SK-N-SH (cell line): ENCODE measurements at regions of chr21 and their contacts with region 1.

Region 1: DNA sequence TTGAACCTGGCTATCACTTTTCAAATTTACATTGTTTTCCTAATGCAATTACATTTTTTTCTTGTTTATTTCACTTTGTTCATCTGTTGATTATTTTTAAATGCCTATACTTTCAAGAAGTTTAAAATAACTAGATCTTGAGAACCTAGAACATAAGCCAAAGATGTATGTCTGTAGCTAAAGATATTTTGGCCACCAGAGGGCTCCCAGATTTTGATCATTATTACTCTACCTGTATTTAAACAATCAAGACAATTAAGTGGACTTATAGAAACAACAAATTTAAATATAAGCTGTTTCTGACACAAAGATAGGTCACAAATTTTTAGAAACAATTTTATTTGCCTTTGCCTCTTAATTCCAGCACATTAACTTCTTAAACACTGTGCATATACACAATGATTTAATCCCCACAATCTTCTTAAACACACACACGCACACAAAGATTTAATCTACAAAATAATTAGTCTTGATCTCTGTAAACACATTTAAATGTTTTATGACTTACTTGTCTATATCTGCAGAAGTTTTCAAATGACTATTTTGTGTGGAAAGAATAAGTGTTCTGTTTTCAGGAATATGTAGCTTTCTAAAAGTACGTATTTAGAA is 380.0 kb downstream of the DSCAM start:
- DNase-seq: peak; percentile 17
- H3K4me3 ChIP-seq: no peak overlapping the region; a peak in 1 of 4 replicates
- H3K27ac ChIP-seq: no peak overlapping the region
- H3K4me1 ChIP-seq: no peaks in the 10 kb centered on the region; a peak in 1 of 4 replicates
- H3K27me3 ChIP-seq: no peaks in the 10 kb centered on the region
- CTCF ChIP-seq: 0 out of 2 replicates have a peak, but pooled peaks have one; percentile 27
- EP300 ChIP-seq: no peak
- RAD21 ChIP-seq: peak; percentile 58

Region 2: GRCh38 chr21:40186045-40186444 is 281.0 kb before region 1 on chr21:
- CTCF ChIA-PET with region 1: no interaction called
- POLR2A ChIA-PET with region 1: no interaction called
- DNase-seq: no peak
- H3K4me3 ChIP-seq: no peak overlapping the region
- H3K27ac ChIP-seq: no peak overlapping the region
- H3K4me1 ChIP-seq: peaks cover 0 to 7% of the 10 kb centered on the region in 2 experiments; a peak in 1 of 4 replicates
- H3K27me3 ChIP-seq: no peaks in the 10 kb centered on the region
- CTCF ChIP-seq: no peak
- EP300 ChIP-seq: no peak
- RAD21 ChIP-seq: no peak

Region 3: DNA sequence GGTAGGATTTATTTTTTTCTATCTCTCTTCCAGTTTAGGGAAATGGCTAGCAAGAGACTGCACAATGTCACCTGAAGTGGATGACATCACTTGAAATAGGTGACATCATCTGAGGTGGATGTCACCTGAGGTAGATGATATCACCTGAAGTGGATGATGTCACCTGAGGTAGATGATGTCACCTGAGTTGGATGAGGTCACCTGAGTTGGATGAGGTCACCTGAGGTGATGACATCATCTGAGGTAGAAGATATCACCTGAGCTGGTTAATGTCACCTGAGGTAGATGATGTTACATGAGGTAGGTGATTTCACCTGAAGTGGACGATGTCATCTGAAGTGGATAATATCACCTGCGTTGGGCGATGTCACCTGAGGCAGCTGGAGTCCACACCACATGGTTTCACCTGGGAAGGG is 33.4 kb before region 1 on chr21:
- CTCF ChIA-PET with region 1: no interaction called
- POLR2A ChIA-PET with region 1: no interaction called
- DNase-seq: no peak
- H3K4me3 ChIP-seq: no peak overlapping the region
- H3K27ac ChIP-seq: no peak overlapping the region
- H3K4me1 ChIP-seq: no peaks in the 10 kb centered on the region; a peak in 1 of 4 replicates
- H3K27me3 ChIP-seq: no peaks in the 10 kb centered on the region
- CTCF ChIP-seq: no peak
- EP300 ChIP-seq: no peak
- RAD21 ChIP-seq: no peak

Region 4: GRCh38 chr21:40447016-40447415 is 20.0 kb before region 1 on chr21:
- CTCF ChIA-PET with region 1: interaction called, 22 read pairs
- POLR2A ChIA-PET with region 1: no interaction called
- DNase-seq: no peak
- H3K4me3 ChIP-seq: no peak overlapping the region
- H3K27ac ChIP-seq: no peak overlapping the region
- H3K4me1 ChIP-seq: peaks cover 0 to 10% of the 10 kb centered on the region in 2 experiments; a peak in 2 of 4 replicates
- H3K27me3 ChIP-seq: no peaks in the 10 kb centered on the region
- CTCF ChIP-seq: no peak
- EP300 ChIP-seq: no peak
- RAD21 ChIP-seq: no peak

Region 5: GRCh38 chr21:40587736-40588346 is 120.8 kb after region 1 on chr21:
- CTCF ChIA-PET with region 1: no interaction called
- POLR2A ChIA-PET with region 1: no interaction called
- DNase-seq: no peak
- H3K4me3 ChIP-seq: no peak overlapping the region
- H3K27ac ChIP-seq: no peak overlapping the region
- H3K4me1 ChIP-seq: no peaks in the 10 kb centered on the region
- H3K27me3 ChIP-seq: no peaks in the 10 kb centered on the region
- CTCF ChIP-seq: no peak
- EP300 ChIP-seq: no peak
- RAD21 ChIP-seq: no peak

Region 6: GRCh38 chr21:40809673-40810197 is 342.7 kb after region 1 on chr21:
- CTCF ChIA-PET with region 1: no interaction called
- POLR2A ChIA-PET with region 1: no interaction called
- DNase-seq: no peak
- H3K4me3 ChIP-seq: no peak overlapping the region
- H3K27ac ChIP-seq: no peak overlapping the region
- H3K4me1 ChIP-seq: no peaks in the 10 kb centered on the region
- H3K27me3 ChIP-seq: no peaks in the 10 kb centered on the region
- CTCF ChIP-seq: no peak
- EP300 ChIP-seq: no peak
- RAD21 ChIP-seq: no peak

Region 7: GRCh38 chr21:40835184-40835694 is 368.2 kb after region 1 on chr21:
- CTCF ChIA-PET with region 1: interaction called, 12 read pairs
- POLR2A ChIA-PET with region 1: no interaction called
- DNase-seq: no peak
- H3K4me3 ChIP-seq: no peak overlapping the region
- H3K27ac ChIP-seq: no peak overlapping the region
- H3K4me1 ChIP-seq: peaks cover 0 to 6% of the 10 kb centered on the region in 2 experiments; a peak in 1 of 4 replicates
- H3K27me3 ChIP-seq: no peaks in the 10 kb centered on the region
- CTCF ChIP-seq: no peak
- EP300 ChIP-seq: no peak
- RAD21 ChIP-seq: no peak

Region 8: GRCh38 chr21:40841524-40842202 is 374.7 kb after region 1 on chr21:
- CTCF ChIA-PET with region 1: interaction called, 29 read pairs
- POLR2A ChIA-PET with region 1: no interaction called
- DNase-seq: peak; percentile 81
- H3K4me3 ChIP-seq: peak overlapping the region in 1 of 2 experiments; percentile 43; a peak in 2 of 4 replicates
- H3K27ac ChIP-seq: no peak overlapping the region
- H3K4me1 ChIP-seq: peaks cover 0 to 5% of the 10 kb centered on the region in 2 experiments; a peak in 1 of 4 replicates
- H3K27me3 ChIP-seq: no peaks in the 10 kb centered on the region
- CTCF ChIP-seq: no peak
- EP300 ChIP-seq: no peak
- RAD21 ChIP-seq: peak; percentile 84

Region 9: DNA sequence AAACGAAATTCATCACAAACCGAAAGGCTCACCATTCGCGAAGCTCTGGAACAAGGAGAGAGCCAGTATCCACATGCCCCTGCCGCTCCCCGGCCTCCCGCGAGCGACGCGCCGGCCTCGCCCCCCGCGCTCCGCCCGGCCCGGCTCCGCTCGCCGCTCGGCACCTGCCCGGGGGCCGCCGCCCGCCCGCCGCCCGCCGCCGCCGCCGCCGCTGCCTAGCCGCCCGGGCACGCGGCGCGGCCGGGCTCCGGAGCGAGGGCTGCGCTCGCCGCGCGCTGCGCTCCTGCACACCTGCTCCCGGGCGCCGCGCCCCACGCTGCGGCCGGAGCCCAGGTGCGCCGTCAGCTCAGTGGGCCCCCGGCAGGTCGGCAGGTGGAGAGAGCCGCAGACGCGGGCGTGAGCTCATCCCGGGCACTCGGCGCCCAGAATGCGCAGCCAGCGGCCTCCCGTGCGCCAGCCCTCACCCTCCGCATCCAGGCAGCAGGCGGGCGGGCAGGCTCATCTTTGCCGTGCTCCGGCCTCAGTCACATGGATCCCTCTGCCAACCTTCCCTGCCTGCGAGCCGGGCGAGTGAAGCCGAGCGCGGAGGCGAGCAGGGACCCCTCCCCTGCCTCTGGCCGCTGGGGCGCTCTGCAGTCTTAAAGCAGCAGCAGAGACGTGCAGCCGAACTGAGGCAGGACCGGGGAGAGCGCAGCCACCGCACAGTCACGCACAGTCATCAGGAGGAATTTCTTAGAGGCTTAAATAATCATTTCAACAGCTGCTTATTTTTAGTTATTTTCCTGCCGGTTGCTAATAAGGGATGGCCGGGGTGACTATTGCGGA is 379.8 kb after region 1 on chr21 and contains the start of gene DSCAM:
- CTCF ChIA-PET with region 1: interaction called, 29 read pairs
- POLR2A ChIA-PET with region 1: no interaction called
- DNase-seq: peak; percentile 57
- H3K4me3 ChIP-seq: peak within 1 kb of the TSS in 1 of 2 experiments; percentile 19; a peak in 1 of 4 replicates
- H3K27ac ChIP-seq: no peak within 1 kb of the TSS
- H3K4me1 ChIP-seq: peaks cover 0 to 3% of the 10 kb centered on the region in 2 experiments; a peak in 1 of 4 replicates
- H3K27me3 ChIP-seq: no peaks in the 10 kb centered on the region
- CTCF ChIP-seq: no peak
- EP300 ChIP-seq: no peak
- RAD21 ChIP-seq: no peak
- polyA plus RNA-seq, gene DSCAM: not detected in 2 replicates